GM23248 (cell line): ENCODE measurements at regions of chr21 and their contacts with region 1.

Region 1: DNA sequence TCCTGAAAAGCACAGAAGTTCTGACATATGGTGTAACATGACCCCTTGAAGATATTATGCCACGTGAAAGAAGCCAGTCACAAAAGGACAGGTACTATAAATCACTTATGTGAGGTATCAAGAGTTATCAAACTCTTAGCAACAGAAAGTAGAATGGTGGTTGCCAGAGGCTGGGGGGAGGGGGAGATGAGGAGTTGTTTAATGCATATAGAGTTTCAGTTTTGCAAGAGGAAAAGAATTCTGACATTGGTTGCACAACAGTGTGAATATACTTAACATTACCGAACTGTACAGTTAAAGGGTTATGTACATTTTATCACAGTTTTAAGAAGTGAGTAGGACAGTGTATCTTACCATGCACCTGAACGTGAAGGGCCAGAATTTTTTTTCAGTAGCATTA is 80.0 kb downstream of the USP25 start:
- DNase-seq: peak; percentile 4
- H3K4me3 ChIP-seq: no peak overlapping the region
- H3K27ac ChIP-seq: no peak overlapping the region
- H3K4me1 ChIP-seq: peaks cover 17% of the 10 kb centered on the region; the same call in 1 of the 2 replicates
- H3K27me3 ChIP-seq: no peaks in the 10 kb centered on the region

Region 2: GRCh38 chr21:14251336-14251735 is 1558.5 kb before region 1 on chr21:
- in situ Hi-C with region 1: no loop called
- DNase-seq: no peak
- H3K4me3 ChIP-seq: no peak overlapping the region
- H3K27ac ChIP-seq: no peak overlapping the region
- H3K4me1 ChIP-seq: no peaks in the 10 kb centered on the region
- H3K27me3 ChIP-seq: no peaks in the 10 kb centered on the region

Region 3: DNA sequence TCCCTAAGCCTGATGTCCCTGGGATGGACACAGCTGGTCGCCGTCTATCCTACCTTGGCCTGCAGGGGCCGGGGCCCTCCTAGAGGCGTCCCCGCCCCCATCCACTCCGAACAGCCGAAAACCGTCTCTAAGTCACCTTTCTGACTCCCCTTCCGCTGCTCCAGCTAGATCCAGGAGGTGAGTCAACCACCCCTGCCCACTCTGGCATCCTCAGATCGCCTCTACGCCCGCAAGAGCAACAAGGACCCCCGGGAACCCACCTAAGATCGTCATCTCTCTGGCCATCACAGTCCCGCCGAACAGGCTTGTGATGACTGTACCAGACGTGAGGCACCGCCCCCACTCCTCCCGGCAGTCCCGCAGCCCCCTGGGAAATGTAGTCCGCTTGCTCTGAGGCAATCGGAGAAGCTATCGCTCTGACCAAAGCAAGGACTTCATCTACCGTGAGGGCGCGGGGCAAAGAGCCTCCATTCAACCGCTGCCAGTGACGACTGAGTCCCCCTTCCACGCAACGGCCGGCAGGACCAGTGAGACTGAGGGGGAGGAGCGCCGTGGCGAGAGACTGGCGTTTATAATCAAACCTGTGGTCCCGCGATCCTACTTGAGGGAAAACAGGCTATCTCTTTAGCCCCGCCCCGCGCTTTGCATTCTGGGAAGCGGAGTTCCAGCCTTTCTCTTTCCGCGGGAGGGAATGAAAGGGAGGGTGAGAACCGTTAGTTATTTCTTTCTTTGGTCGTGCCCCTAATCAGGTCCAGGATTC is 1426.8 kb before region 1 on chr21 and contains the start of gene HSPA13:
- in situ Hi-C with region 1: loop called (anchors 25 kb)
- DNase-seq: peak; percentile 100
- H3K4me3 ChIP-seq: peak within 1 kb of the TSS; percentile 90
- H3K27ac ChIP-seq: peak within 1 kb of the TSS; percentile 80
- H3K4me1 ChIP-seq: peaks cover 32% of the 10 kb centered on the region
- H3K27me3 ChIP-seq: no peaks in the 10 kb centered on the region
- total RNA-seq, gene HSPA13: 69.7 and 76.2 TPM in 2 replicates